Activated CD4-positive, alpha-beta T cell treated with anti-CD3 and anti-CD28 coated beads for 36 hours (primary cell): ENCODE measurements at regions of chr12 and their contacts with region 1.

Region 1: DNA sequence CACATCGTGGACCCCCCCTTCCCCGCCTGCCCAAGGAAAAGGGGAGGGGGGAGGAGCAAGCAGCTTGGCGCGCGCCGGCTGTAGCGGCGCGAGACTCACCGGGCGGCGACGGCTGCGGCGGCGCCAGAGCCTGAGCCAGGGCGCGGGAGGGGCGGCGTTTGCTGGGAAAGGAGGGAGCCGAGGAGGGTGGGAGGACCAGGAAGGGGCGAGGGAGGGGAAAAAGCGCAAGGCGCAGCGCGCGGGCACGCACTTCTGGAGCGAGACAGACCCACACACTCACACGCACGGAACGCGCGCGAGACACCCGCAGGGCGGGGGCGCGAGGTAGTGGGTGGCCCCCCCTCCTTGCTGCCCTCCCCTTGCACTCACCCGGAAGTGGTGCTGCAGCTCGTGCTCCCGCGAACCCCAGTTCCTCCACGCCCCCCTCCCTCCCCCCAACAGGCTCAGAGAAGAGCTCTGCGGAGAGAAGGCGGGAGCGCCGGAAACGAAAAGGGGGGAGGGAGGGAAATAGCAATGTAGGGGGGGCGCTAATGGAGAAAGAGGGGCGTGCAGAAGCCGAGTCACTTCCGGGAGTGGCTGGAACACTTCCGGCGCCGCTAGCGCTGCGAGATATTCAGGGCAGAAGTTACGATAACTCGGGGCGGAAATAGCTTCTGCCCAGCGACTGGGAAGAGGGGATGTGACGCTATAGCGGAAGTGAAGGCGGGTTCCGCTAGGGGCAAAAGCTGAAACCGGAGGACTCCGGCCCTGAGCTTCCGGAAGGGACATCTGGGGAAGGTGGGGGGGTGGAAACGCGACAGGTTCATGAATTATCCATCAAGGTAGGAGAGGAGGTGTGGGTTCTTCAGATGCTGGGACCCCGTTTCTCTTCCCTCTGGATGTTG is at the start of gene ZNF384:
- DNase-seq: peak; percentile 96
- ATAC-seq: peak; percentile 84
- H3K4me3 Mint-ChIP-seq: peak within 1 kb of the TSS; percentile 86
- H3K27ac Mint-ChIP-seq: peak within 1 kb of the TSS; percentile 92
- H3K4me1 Mint-ChIP-seq: peaks cover 41% of the 10 kb centered on the region
- H3K27me3 Mint-ChIP-seq: no peaks in the 10 kb centered on the region
- total RNA-seq, gene ZNF384: 61.4 to 79.0 TPM

Region 2: GRCh38 chr12:6470375-6471163 is 218.7 kb before region 1 on chr12 and contains the start of gene VAMP1:
- CTCF ChIA-PET with region 1: no interaction called
- POLR2A ChIA-PET with region 1: interaction called, 3 read pairs
- intact Hi-C with region 1: loop called in 1 of 2 experiments (anchors 2 kb)
- DNase-seq: peak; percentile 99
- ATAC-seq: peak; percentile 91
- H3K4me3 Mint-ChIP-seq: peak within 1 kb of the TSS; percentile 91
- H3K27ac Mint-ChIP-seq: peak within 1 kb of the TSS; percentile 82
- H3K4me1 Mint-ChIP-seq: peaks cover 52% of the 10 kb centered on the region
- H3K27me3 Mint-ChIP-seq: no peaks in the 10 kb centered on the region
- total RNA-seq, gene VAMP1: 34.5 to 52.3 TPM

Region 3: DNA sequence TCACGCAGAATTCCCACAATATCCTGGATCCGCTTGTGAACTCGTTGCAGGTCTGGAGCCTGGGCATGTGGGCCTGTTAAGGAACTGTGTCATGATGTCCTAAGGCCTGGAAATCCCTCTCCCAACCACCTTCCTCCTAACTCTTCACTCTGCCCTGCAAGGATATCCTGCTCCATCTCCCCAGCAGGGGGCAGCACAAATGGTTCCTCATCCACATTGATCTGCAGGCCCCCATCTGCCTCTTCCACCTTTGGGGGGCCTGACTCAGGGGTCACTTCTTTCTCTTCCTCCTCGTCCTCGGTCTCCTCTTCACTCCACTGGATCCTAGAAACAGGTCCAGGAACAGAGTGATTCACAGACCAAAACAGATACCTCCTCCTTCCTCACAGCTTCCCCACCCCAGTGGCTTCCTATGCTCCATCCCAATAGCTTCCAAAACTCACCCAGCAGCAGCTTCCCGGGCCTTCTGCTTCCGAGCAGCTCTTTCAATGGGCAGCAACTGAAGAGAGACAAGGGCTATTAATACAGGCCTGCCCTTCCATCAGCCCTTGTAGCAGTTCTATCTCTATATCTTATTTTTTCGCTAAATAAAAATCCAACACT is 125.7 kb before region 1 on chr12:
- CTCF ChIA-PET with region 1: interaction called, 4 read pairs
- POLR2A ChIA-PET with region 1: interaction called, 5 read pairs
- intact Hi-C with region 1: loop called (anchors 1 to 5 kb)
- DNase-seq: peak; percentile 82
- ATAC-seq: peak; percentile 37
- H3K4me3 Mint-ChIP-seq: no peak overlapping the region
- H3K27ac Mint-ChIP-seq: peak overlapping the region; percentile 17
- H3K4me1 Mint-ChIP-seq: peaks cover 40% of the 10 kb centered on the region
- H3K27me3 Mint-ChIP-seq: no peaks in the 10 kb centered on the region

Region 4: DNA sequence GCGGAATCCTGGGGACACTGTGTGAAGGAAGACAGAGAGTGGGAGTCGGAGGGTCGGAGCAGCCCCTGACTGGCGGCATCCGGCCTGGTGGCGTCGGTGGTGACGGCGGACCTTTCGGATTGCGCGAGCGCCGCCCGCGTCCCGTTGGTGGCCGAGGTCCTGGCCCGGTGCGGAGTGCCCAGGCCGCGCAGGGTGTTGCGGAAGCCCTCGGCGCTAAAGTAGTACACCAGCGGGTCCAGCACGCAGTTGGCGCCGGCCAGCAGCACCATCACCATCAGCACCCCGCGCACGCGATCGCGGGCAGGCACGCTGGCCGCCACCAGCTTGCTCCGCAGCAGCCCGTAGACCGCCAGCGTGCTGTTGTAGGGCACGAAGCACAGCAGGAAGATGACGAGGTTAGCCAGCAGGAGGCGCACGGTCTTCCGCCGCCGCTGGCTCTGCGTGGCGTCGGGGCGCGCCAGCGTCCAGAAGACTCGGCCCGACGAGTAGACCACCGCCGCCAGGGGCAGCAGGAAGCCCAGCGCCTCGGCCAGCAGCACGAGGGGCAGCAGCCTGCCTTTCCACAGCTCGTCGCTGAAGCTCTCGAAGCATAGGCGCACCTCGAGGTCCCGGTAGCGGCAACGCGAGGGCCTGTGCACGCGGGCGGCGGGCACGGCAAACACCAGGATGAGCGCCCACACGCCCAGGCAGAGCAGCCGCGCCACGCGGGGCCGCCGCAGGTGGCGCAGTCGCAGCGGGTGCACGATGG is 68.9 kb before region 1 on chr12:
- CTCF ChIA-PET with region 1: interaction called, 20 read pairs
- POLR2A ChIA-PET with region 1: no interaction called
- intact Hi-C with region 1: loop called (anchors 1 kb)
- DNase-seq: peak; percentile 82
- ATAC-seq: peak; percentile 82
- H3K4me3 Mint-ChIP-seq: peak overlapping the region; percentile 67
- H3K27ac Mint-ChIP-seq: peak overlapping the region; percentile 73
- H3K4me1 Mint-ChIP-seq: peaks cover 8% of the 10 kb centered on the region
- H3K27me3 Mint-ChIP-seq: no peaks in the 10 kb centered on the region

Region 5: DNA sequence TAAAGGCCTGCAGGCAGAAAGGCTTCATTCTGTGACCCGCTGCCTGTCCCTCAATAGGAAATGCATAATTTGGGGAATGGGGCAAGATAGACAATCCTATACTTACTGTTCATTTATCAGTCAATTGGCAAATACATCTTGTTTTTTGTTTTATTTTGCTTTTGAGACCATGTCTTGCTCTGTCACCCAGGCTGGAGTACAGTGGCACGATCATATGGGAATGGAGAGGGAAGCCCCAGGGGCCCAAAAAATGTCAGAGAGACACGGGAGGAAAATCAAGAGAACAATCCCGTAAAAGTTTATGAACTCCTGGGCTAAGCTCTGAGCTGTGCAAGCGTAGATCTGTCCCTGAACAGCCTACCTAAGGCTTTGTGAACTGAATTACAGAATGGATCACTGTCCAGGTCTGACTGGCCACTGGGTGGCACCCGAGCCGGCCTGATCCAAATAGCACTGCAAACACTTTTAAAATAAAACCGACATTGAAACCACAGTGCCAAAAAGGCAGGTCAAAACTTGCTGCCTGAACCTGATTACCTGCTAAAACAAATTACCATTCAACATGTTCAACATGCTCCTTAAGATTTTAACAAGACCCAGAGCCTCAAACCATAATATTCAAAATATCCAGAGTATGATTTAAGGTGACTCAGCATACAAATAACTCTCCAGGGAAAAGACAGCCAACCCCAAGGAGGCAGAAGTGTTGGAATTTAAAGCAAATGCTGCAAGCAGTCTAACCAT is 46.4 kb after region 1 on chr12:
- CTCF ChIA-PET with region 1: no interaction called
- POLR2A ChIA-PET with region 1: no interaction called
- intact Hi-C with region 1: no loop called
- DNase-seq: peak; percentile 72
- ATAC-seq: peak; percentile 81
- H3K4me3 Mint-ChIP-seq: no peak overlapping the region
- H3K27ac Mint-ChIP-seq: no peak overlapping the region
- H3K4me1 Mint-ChIP-seq: peaks cover 6% of the 10 kb centered on the region
- H3K27me3 Mint-ChIP-seq: no peaks in the 10 kb centered on the region

Region 6: GRCh38 chr12:6752921-6753771 is 63.9 kb after region 1 on chr12 and contains the start of gene MLF2:
- CTCF ChIA-PET with region 1: interaction called, 10 read pairs
- POLR2A ChIA-PET with region 1: interaction called, 16 read pairs
- intact Hi-C with region 1: loop called (anchors 1 kb)
- DNase-seq: peak; percentile 99
- ATAC-seq: peak; percentile 96
- H3K4me3 Mint-ChIP-seq: peak within 1 kb of the TSS; percentile 87
- H3K27ac Mint-ChIP-seq: peak within 1 kb of the TSS; percentile 97
- H3K4me1 Mint-ChIP-seq: peaks cover 26% of the 10 kb centered on the region
- H3K27me3 Mint-ChIP-seq: no peaks in the 10 kb centered on the region
- total RNA-seq, gene MLF2: 142 to 144 TPM

Region 7: GRCh38 chr12:6873094-6874014 is 184.1 kb after region 1 on chr12 and contains the start of gene SPSB2:
- CTCF ChIA-PET with region 1: interaction called, 3 read pairs
- POLR2A ChIA-PET with region 1: interaction called, 11 read pairs
- intact Hi-C with region 1: loop called in 1 of 2 experiments (anchors 1 kb)
- DNase-seq: peak; percentile 100
- ATAC-seq: peak; percentile 74
- H3K4me3 Mint-ChIP-seq: peak within 1 kb of the TSS; percentile 93
- H3K27ac Mint-ChIP-seq: peak within 1 kb of the TSS; percentile 86
- H3K4me1 Mint-ChIP-seq: peaks cover 50% of the 10 kb centered on the region
- H3K27me3 Mint-ChIP-seq: no peaks in the 10 kb centered on the region
- total RNA-seq, gene SPSB2: 1.7 to 2.2 TPM

Region 8: GRCh38 chr12:6927379-6928024 is 238.3 kb after region 1 on chr12 and contains the start of gene ATN1:
- CTCF ChIA-PET with region 1: no interaction called
- POLR2A ChIA-PET with region 1: no interaction called
- intact Hi-C with region 1: no loop called
- DNase-seq: peak; percentile 69
- ATAC-seq: peak; percentile 31
- H3K4me3 Mint-ChIP-seq: peak within 1 kb of the TSS; percentile 83
- H3K27ac Mint-ChIP-seq: peak within 1 kb of the TSS; percentile 84
- H3K4me1 Mint-ChIP-seq: peaks cover 58% of the 10 kb centered on the region
- H3K27me3 Mint-ChIP-seq: no peaks in the 10 kb centered on the region
- total RNA-seq, gene ATN1: 32.2 to 32.4 TPM